ENCODE measurements at regions of chr11 and their contacts with region 1.

Region 1: DNA sequence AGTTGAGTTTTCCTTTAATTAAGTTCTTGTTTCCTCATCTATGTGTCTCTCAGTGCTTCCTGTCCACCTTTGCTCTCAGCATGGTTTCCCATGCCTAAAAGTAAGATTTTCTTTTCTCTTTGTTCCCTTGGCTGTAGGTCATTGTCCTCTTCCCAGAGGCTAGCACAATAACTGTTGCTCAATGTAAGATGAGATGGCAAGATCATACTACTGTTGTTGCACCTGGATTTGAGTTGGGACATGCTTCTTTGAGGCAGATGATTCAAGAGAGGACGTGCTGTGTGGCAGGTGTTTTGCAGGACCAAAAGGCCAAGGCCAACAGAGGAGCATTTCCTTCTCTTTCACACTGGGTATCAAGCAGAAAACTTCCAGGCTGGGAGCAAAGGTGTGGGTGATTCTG is 11.3 kb upstream of the NELL1 start:
- DNase-seq: no peak
- ATAC-seq: no peak
- H3K4me3 ChIP-seq: no peak overlapping the region
- H3K27ac ChIP-seq: no peak overlapping the region
- H3K4me1 ChIP-seq: no peaks in the 10 kb centered on the region
- H3K27me3 ChIP-seq: no peaks in the 10 kb centered on the region

Region 2: DNA sequence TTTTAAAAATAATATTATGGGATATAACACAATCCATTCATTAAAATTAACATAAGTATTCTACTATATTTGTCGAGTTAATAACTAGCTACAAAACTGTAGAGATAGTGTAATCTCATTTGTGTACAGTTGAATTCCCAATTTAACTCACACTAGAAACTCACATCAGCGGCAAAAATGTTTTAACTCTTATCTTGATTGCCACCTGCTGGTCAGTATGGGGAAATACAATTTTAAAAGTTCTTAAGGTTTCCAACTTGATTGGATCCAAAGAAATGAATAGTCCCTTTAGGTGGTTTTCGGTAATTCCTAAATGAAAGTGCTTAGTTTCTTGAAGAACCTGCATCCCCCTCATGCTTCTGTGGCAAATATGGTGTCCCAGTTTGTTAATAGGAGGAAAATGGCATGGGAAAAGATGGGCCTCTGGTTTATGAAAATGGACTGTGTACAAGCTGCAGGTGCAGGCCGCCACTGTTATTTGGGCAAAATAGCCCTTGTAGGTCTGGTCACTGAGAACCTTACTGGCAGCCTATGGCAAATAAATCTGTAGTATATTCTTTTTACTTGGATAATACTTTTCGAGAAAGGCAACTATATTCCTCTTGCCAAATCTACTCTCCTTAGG is 1646.3 kb after region 1 on chr11:
- intact Hi-C with region 1: loop called in 1 of 2 experiments (anchors 10 kb)
- DNase-seq: no peak
- ATAC-seq: no peak
- H3K4me3 ChIP-seq: no peak overlapping the region
- H3K27ac ChIP-seq: no peak overlapping the region
- H3K4me1 ChIP-seq: no peaks in the 10 kb centered on the region
- H3K27me3 ChIP-seq: no peaks in the 10 kb centered on the region